ENCODE measurements at regions of chr3 and their contacts with region 1.

Region 1: GRCh38 chr3:171269542-171269941 is 190.7 kb downstream of the TNIK start:
- DNase-seq: no peak
- ATAC-seq: peak; percentile 71
- H3K4me3 Mint-ChIP-seq: peak overlapping the region; percentile 45
- H3K27ac Mint-ChIP-seq: peak overlapping the region; percentile 53
- H3K4me1 Mint-ChIP-seq: peaks cover 65% of the 10 kb centered on the region
- H3K27me3 Mint-ChIP-seq: no peaks in the 10 kb centered on the region

Region 2: DNA sequence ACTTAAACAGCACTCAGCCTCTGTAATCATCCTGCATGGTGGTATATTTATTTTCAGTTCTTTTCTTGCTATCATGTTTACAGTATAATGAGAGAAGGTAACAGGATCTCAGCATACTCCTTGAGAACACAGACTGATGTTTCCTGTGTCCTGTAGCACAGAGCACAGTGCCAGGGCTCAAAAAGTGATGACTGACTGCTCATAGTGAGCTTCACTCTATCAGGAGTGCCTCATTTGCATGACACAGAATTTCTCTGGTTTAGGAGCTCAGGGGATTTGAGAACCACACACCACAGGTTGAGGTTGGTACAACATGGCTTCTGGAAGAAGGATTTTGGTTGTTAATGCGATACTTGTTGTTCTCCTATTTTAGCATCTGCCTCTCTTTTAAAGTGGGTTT is 174.5 kb before region 1 on chr3:
- CTCF ChIA-PET with region 1: no interaction called
- POLR2A ChIA-PET with region 1: no interaction called
- DNase-seq: no peak
- ATAC-seq: no peak
- H3K4me3 Mint-ChIP-seq: no peak overlapping the region
- H3K27ac Mint-ChIP-seq: no peak overlapping the region
- H3K4me1 Mint-ChIP-seq: peaks cover 2% of the 10 kb centered on the region
- H3K27me3 Mint-ChIP-seq: no peaks in the 10 kb centered on the region

Region 3: GRCh38 chr3:171255236-171255806 is 14.2 kb before region 1 on chr3:
- CTCF ChIA-PET with region 1: interaction called, 10 read pairs
- POLR2A ChIA-PET with region 1: interaction called, 8 read pairs
- DNase-seq: no peak
- ATAC-seq: peak; percentile 71
- H3K4me3 Mint-ChIP-seq: peak overlapping the region; percentile 67
- H3K27ac Mint-ChIP-seq: peak overlapping the region; percentile 97
- H3K4me1 Mint-ChIP-seq: peaks cover 73% of the 10 kb centered on the region
- H3K27me3 Mint-ChIP-seq: no peaks in the 10 kb centered on the region

Region 4: DNA sequence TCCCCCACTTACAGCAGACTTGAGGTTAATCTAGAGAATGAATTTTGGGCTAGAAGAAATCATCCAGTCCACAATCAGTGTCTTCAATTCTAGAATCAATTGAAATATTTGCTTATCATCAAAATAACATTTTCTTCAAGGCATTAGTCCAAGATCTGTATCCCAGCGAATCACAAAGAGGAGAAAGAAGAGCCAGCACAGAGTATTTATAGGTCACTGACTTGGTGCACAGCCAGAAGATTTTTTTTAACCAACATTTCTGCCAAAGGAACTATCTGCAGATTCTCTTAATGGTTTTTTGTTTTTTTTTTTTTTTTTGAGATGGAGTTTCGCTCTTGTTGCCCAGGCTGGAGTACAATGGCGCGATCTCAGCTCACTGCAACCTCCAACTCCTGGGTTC is 12.5 kb after region 1 on chr3:
- CTCF ChIA-PET with region 1: interaction called, 21 read pairs
- POLR2A ChIA-PET with region 1: no interaction called
- DNase-seq: no peak
- ATAC-seq: no peak
- H3K4me3 Mint-ChIP-seq: no peak overlapping the region
- H3K27ac Mint-ChIP-seq: no peak overlapping the region
- H3K4me1 Mint-ChIP-seq: peaks cover 48% of the 10 kb centered on the region
- H3K27me3 Mint-ChIP-seq: no peaks in the 10 kb centered on the region

Measured in activated CD8-positive, alpha-beta T cell treated with anti-CD3 and anti-CD28 coated beads, Interleukin-2, amount 10 ng/mL, durations not matched to agents 7 days and 5 days (primary cell).